Activated naive CD4-positive, alpha-beta T cell treated with anti-CD3 and anti-CD28 coated beads for 36 hours (primary cell): ENCODE measurements at regions of chr11 and their contacts with region 1.

Region 1: GRCh38 chr11:123429913-123430720 is at the start of gene GRAMD1B:
- DNase-seq: peak; percentile 87
- H3K4me3 Mint-ChIP-seq: peak within 1 kb of the TSS; percentile 92
- H3K27ac Mint-ChIP-seq: peak within 1 kb of the TSS; percentile 85
- H3K4me1 Mint-ChIP-seq: peaks cover 33% of the 10 kb centered on the region
- H3K27me3 Mint-ChIP-seq: peaks cover 2% of the 10 kb centered on the region
- total RNA-seq, gene GRAMD1B: 43.7 to 47.2 TPM

Region 2: DNA sequence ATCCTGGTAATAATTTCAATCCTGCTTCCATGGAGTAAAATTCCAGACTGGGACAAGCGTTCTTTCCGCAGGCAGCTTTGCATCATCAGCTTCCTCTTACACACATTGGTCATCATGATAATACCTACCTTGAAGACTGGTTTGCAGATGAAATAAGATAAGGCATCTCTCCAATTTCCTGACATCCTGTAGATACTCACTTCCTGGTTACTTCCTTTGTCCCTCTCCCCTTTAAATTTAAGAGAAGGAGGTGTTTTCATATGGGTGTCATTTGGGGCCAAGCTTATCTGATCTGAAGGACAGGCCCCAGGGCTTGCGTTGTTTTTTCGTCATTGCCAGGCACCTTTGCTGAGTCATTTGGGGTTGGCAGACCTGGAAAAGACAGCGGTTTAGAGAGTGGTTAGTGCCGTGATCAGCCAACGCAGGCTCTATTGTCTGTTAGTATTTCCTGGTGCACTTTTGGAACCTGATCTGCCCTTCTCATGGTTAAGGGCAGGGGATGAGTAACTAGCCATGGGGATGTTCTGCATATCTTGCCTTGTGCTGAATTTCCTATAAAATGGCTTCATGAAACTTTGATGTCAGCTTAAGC is 24.0 kb after region 1 on chr11:
- CTCF ChIA-PET with region 1: interaction called, 4 read pairs
- intact Hi-C with region 1: loop called (anchors 1 kb)
- DNase-seq: peak; percentile 93
- H3K4me3 Mint-ChIP-seq: peak overlapping the region; percentile 72
- H3K27ac Mint-ChIP-seq: peak overlapping the region; percentile 93
- H3K4me1 Mint-ChIP-seq: peaks cover 73% of the 10 kb centered on the region
- H3K27me3 Mint-ChIP-seq: no peaks in the 10 kb centered on the region